ENCODE measurements at regions of chr1 and their contacts with region 1.

Region 1: DNA sequence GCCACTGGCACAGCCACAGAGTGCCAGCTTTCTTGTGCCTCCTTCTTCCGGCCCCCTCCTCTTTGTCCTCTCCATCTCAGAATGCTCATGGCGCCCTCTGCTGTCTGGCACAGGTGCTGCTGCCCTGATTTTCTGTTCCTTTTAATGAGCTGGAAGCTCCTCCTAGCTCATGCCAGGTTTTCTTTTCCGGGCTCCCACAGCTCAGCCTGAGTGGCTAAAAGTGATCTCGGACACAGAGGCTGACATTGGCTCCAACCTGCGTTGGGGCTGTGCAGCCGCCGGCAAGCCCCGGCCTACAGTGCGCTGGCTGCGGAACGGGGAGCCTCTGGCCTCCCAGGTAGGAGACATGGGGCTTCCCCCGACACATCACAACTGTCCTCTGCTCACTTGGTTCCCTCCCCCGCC is 18.7 kb downstream of the CNTN2 start:
- DNase-seq: no peak
- H3K4me3 ChIP-seq: no peak overlapping the region
- H3K27me3 ChIP-seq: no peaks in the 10 kb centered on the region; the same call in none of the 2 replicates
- CTCF ChIP-seq: peak; percentile 91

Region 2: DNA sequence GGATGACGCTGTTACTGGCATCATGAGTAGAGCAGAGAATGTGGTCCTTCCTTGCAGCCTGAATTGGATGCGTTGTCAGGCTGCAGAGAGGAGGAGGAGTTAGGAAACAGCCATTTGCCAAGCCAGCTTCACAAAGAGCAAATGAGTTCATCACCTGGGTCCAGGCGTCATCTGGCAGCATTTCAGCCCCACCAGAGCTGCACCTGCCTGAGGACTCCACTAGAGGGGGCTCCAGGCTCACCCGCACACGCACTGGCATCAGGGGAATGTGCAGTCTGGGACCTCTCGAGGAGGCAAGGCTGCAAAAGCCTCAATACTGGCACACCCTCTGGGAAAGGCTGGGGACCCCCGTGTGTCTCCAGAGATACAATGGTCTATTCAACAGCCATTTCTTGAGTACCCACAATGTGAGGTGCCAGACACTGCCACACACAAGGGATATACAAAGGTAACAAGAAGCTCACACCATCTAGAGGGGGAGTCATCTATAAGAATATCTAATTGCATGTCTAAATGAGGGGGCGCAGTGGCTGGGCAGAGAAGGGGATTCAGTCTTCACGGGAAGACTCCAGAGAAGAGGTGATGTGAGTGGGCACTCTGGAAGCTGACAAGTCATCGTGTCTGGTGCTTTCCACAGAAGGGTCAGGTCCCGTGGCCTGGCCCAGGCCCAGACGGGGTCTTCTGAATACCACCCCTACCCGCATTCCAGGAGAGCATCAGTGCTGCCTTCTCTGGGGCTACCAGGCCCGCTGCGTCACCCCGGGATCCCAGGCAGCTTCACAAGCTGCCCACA is 72.2 kb before region 1 on chr1:
- CTCF ChIA-PET with region 1: interaction called, 116 read pairs
- POLR2A ChIA-PET with region 1: no interaction called
- DNase-seq: peak; percentile 16
- H3K4me3 ChIP-seq: no peak overlapping the region
- H3K27me3 ChIP-seq: no peaks in the 10 kb centered on the region
- CTCF ChIP-seq: peak; percentile 99

Region 3: GRCh38 chr1:205030896-205031295 is 30.8 kb before region 1 on chr1:
- CTCF ChIA-PET with region 1: interaction called, 13 read pairs
- POLR2A ChIA-PET with region 1: no interaction called
- DNase-seq: no peak
- H3K4me3 ChIP-seq: no peak overlapping the region
- H3K27me3 ChIP-seq: peaks cover 34% of the 10 kb centered on the region
- CTCF ChIP-seq: no peak

Region 4: GRCh38 chr1:205077158-205077933 is 15.7 kb after region 1 on chr1:
- CTCF ChIA-PET with region 1: interaction called, 32 read pairs
- POLR2A ChIA-PET with region 1: no interaction called
- DNase-seq: no peak
- H3K4me3 ChIP-seq: no peak overlapping the region
- H3K27me3 ChIP-seq: no peaks in the 10 kb centered on the region
- CTCF ChIP-seq: no peak